ENCODE measurements at regions of chr22 and their contacts with region 1.

Region 1: DNA sequence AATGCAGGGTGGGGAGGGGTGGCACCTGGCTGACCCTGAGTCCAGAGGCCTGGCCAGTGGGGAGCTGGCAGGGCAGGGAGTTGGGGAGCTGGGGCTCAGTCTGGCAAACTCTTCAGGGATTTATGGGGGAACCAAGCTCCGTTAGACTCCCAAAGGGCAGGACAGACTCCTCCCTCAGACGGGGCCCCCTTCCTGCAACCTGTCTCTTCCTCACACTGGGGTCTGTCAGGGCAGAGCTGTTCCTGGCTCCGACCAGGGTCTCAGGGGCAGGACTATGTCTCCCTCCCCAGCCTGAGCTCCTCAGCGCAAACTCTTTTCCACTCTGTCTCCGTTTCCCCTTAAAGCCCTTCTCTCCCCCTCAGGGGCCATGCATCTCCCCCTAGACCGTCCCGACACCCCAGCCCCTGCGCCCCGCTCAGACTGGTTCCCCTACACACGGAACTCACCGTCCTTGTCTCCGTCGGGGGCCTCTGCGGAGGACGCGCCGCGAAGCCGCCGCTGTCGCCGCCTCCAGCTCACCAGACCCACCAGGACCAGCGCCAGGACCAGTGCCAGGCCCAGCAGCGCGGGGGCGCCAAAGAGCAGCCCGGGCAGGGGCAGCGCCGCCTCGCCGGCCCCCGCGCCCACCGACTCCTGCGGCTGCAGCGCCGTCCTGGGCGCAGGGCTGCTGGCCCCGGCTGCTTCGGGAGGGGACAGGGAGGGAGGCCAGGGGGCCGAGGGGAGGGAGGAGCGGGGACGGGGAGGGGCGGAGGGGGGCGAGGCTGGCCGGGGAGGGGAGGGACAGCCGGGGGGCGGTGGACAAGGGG is 748 bp downstream of the TNFRSF13C start:
- DNase-seq: peak in 1 of 2 experiments; percentile 95
- H3K4me3 ChIP-seq: peak overlapping the region; percentile 23 to 71 (median 31); a peak in 6 of 8 replicates
- H3K27ac ChIP-seq: no peak overlapping the region
- H3K4me1 ChIP-seq: peaks cover 0 to 24% (median 15%) of the 10 kb centered on the region in 4 experiments; a peak in 6 of 7 replicates
- H3K27me3 ChIP-seq: peaks cover 13 to 63% (median 46%) of the 10 kb centered on the region in 4 experiments
- CTCF ChIP-seq: peak; percentile 90 to 93 (median 91)
- EP300 ChIP-seq: no peak
- POLR2A ChIP-seq: 0 out of 3 replicates have a peak, but pooled peaks of 1 of the 2 experiments have one; percentile 22
- RAD21 ChIP-seq: peak; percentile 38 to 64

Region 2: DNA sequence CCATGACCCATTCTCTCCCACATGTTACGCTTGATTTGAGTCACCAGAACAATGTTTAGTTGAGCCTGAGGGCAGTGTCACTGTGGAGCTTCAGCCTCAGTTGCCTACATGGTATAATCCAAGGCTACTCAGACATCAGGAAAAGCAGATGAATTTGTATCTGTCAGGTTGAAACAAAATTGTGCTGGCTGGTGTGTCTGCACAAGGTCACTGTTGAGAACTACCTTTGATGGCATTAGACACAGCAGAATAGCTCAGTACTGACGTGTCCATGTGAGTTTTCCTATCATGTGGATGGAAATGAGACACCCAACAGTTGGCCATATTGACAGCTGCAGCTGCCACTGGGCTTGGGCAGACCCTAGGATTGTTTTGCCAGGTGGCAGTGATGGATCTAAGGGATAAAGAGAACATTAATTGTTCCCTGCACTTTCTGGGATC is 109.7 kb before region 1 on chr22:
- CTCF ChIA-PET with region 1: no interaction called
- POLR2A ChIA-PET with region 1: no interaction called
- DNase-seq: no peak
- H3K4me3 ChIP-seq: no peak overlapping the region
- H3K27ac ChIP-seq: no peak overlapping the region
- H3K4me1 ChIP-seq: no peaks in the 10 kb centered on the region
- H3K27me3 ChIP-seq: no peaks in the 10 kb centered on the region; a peak in 1 of 7 replicates
- CTCF ChIP-seq: no peak
- EP300 ChIP-seq: no peak
- POLR2A ChIP-seq: no peak
- RAD21 ChIP-seq: no peak

Region 3: GRCh38 chr22:41891407-41891806 is 34.5 kb before region 1 on chr22:
- CTCF ChIA-PET with region 1: no interaction called
- POLR2A ChIA-PET with region 1: no interaction called
- DNase-seq: no peak
- H3K4me3 ChIP-seq: no peak overlapping the region
- H3K27ac ChIP-seq: no peak overlapping the region
- H3K4me1 ChIP-seq: no peaks in the 10 kb centered on the region
- H3K27me3 ChIP-seq: no peaks in the 10 kb centered on the region
- CTCF ChIP-seq: no peak
- EP300 ChIP-seq: no peak
- POLR2A ChIP-seq: no peak
- RAD21 ChIP-seq: no peak

Region 4: GRCh38 chr22:41910050-41911000 is 15.5 kb before region 1 on chr22:
- CTCF ChIA-PET with region 1: interaction called, 32 read pairs
- POLR2A ChIA-PET with region 1: interaction called, 19 read pairs
- DNase-seq: peak in 1 of 2 experiments; percentile 78
- H3K4me3 ChIP-seq: peak overlapping the region in 1 of 4 experiments; percentile 55; a peak in 3 of 8 replicates
- H3K27ac ChIP-seq: no peak overlapping the region
- H3K4me1 ChIP-seq: peaks cover 0 to 29% (median 13%) of the 10 kb centered on the region in 4 experiments; a peak in 6 of 7 replicates
- H3K27me3 ChIP-seq: peaks cover 55 to 71% (median 67%) of the 10 kb centered on the region in 4 experiments
- CTCF ChIP-seq: no peak
- EP300 ChIP-seq: no peak
- POLR2A ChIP-seq: no peak
- RAD21 ChIP-seq: no peak

Region 5: DNA sequence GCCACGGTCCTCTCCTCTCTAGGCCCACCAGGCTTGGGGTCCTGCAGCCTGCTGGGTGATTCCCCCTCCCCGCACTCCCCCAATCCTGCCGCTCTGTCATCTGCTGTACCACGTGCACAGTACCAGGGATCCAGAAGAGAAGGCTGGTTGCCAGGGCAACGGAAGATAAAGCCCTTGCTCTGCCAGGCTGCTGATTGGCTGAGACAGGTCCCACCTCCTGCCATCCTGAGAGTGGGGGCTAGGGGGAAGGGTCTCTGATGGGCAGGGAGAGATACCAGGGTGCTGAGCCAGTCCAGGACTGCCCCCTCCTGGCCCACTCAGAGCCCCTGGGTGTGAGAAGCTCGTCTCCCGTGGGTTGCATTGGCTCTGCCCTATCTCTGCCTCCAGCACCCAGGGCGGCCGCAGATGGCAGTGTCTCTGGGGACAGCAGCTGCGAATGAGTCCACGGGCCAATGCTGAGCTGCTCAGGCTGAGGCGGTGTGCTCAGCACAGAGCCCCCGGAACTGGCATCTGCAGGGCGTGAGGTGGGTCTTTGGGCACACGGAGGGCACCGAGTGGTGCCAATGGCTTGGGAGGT is 26.1 kb after region 1 on chr22 and contains the start of gene SMIM45:
- CTCF ChIA-PET with region 1: interaction called, 21 read pairs
- POLR2A ChIA-PET with region 1: interaction called, 14 read pairs
- DNase-seq: peak in 1 of 2 experiments; percentile 77
- H3K4me3 ChIP-seq: no peak within 1 kb of the TSS
- H3K27ac ChIP-seq: no peak within 1 kb of the TSS
- H3K4me1 ChIP-seq: peaks cover 3 to 15% (median 5%) of the 10 kb centered on the region in 4 experiments; a peak in 6 of 7 replicates
- H3K27me3 ChIP-seq: no peaks in the 10 kb centered on the region
- CTCF ChIP-seq: peak in 2 of 3 experiments; percentile 8 to 11; a peak in 2 of 4 replicates
- EP300 ChIP-seq: no peak
- POLR2A ChIP-seq: no peak
- RAD21 ChIP-seq: no peak; a peak in 2 of 4 replicates